ENCODE measurements at regions of chr2 and their contacts with region 1.

Region 1: GRCh38 chr2:159712143-159712928 is at the start of gene MARCHF7:
- DNase-seq: peak; percentile 97 to 100 (median 98)
- H3K4me3 ChIP-seq: peak within 1 kb of the TSS; percentile 88 to 98
- H3K4me3 Mint-ChIP-seq: peak within 1 kb of the TSS; percentile 97 to 100 (median 99)
- H3K27ac ChIP-seq: peak within 1 kb of the TSS; percentile 92
- H3K27ac Mint-ChIP-seq: peak within 1 kb of the TSS; percentile 90 to 100 (median 100)
- H3K4me1 ChIP-seq: peaks cover 53% of the 10 kb centered on the region
- H3K4me1 Mint-ChIP-seq: peaks cover 36 to 63% (median 49%) of the 10 kb centered on the region in 4 donors
- H3K27me3 ChIP-seq: no peaks in the 10 kb centered on the region
- H3K27me3 Mint-ChIP-seq: no peaks in the 10 kb centered on the region
- total RNA-seq, gene MARCHF7: 113 to 115 TPM

Region 2: GRCh38 chr2:157876066-157876787 is 1836.1 kb before region 1 on chr2 and contains the start of gene ACVR1:
- CTCF ChIA-PET with region 1: no interaction called
- POLR2A ChIA-PET with region 1: interaction called, 6 read pairs
- intact Hi-C with region 1: loop called (anchors 5 kb)
- DNase-seq: peak; percentile 78 to 90 (median 80)
- H3K4me3 ChIP-seq: peak within 1 kb of the TSS; percentile 74 to 76
- H3K4me3 Mint-ChIP-seq: peak within 1 kb of the TSS; percentile 94 to 100 (median 96)
- H3K27ac ChIP-seq: peak within 1 kb of the TSS; percentile 66
- H3K27ac Mint-ChIP-seq: peak within 1 kb of the TSS; percentile 88 to 96 (median 93)
- H3K4me1 ChIP-seq: peaks cover 71% of the 10 kb centered on the region
- H3K4me1 Mint-ChIP-seq: peaks cover 46 to 69% (median 60%) of the 10 kb centered on the region in 4 donors
- H3K27me3 ChIP-seq: no peaks in the 10 kb centered on the region
- H3K27me3 Mint-ChIP-seq: no peaks in the 10 kb centered on the region
- total RNA-seq, gene ACVR1: 26.9 to 31.9 TPM

Region 3: GRCh38 chr2:159286709-159287441 is 425.5 kb before region 1 on chr2:
- CTCF ChIA-PET with region 1: no interaction called
- POLR2A ChIA-PET with region 1: interaction called, 11 read pairs
- intact Hi-C with region 1: loop called (anchors 1 kb)
- DNase-seq: peak; percentile 94 to 95 (median 95)
- H3K4me3 ChIP-seq: peak overlapping the region; percentile 20 to 67
- H3K4me3 Mint-ChIP-seq: peak overlapping the region; percentile 85 to 92 (median 89)
- H3K27ac ChIP-seq: peak overlapping the region; percentile 64
- H3K27ac Mint-ChIP-seq: peak overlapping the region; percentile 61 to 93 (median 82)
- H3K4me1 ChIP-seq: peaks cover 13% of the 10 kb centered on the region
- H3K4me1 Mint-ChIP-seq: peaks cover 15 to 30% (median 23%) of the 10 kb centered on the region in 4 donors
- H3K27me3 ChIP-seq: no peaks in the 10 kb centered on the region
- H3K27me3 Mint-ChIP-seq: no peaks in the 10 kb centered on the region

Region 4: GRCh38 chr2:159516241-159516766 is 196.0 kb before region 1 on chr2:
- CTCF ChIA-PET with region 1: interaction called, 7 read pairs
- POLR2A ChIA-PET with region 1: interaction called, 25 read pairs
- intact Hi-C with region 1: loop called (anchors 1 kb)
- DNase-seq: peak; percentile 64 to 80 (median 69)
- H3K4me3 ChIP-seq: peak overlapping the region; percentile 82 to 83
- H3K4me3 Mint-ChIP-seq: peak overlapping the region; percentile 71 to 89 (median 85)
- H3K27ac ChIP-seq: peak overlapping the region; percentile 58
- H3K27ac Mint-ChIP-seq: peak overlapping the region; percentile 48 to 95 (median 88)
- H3K4me1 ChIP-seq: peaks cover 33% of the 10 kb centered on the region
- H3K4me1 Mint-ChIP-seq: peaks cover 13 to 40% (median 23%) of the 10 kb centered on the region in 4 donors
- H3K27me3 ChIP-seq: no peaks in the 10 kb centered on the region
- H3K27me3 Mint-ChIP-seq: no peaks in the 10 kb centered on the region

Region 5: DNA sequence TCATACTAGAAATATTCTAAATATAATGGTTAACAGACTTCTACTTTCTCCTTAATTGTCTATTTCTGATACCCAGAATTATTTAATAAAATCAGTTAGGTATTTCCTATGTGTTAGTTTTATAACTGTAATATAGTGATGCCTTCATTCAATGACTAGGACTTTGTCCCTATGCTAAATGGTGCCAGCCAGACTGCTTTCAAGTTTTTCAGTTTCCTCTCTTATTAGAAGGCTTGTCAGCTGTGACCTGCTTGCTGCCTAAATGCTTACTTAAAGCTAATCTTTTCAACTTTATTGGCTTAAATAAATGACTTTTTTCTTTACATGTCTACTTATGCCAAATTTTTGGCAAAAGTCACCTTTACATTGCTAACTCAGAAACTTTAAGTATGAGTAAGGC is 126.7 kb before region 1 on chr2:
- CTCF ChIA-PET with region 1: no interaction called
- POLR2A ChIA-PET with region 1: no interaction called
- intact Hi-C with region 1: no loop called
- DNase-seq: no peak
- H3K4me3 ChIP-seq: no peak overlapping the region
- H3K4me3 Mint-ChIP-seq: no peak overlapping the region
- H3K27ac ChIP-seq: no peak overlapping the region
- H3K27ac Mint-ChIP-seq: no peak overlapping the region
- H3K4me1 ChIP-seq: no peaks in the 10 kb centered on the region
- H3K4me1 Mint-ChIP-seq: no peaks in the 10 kb centered on the region
- H3K27me3 ChIP-seq: no peaks in the 10 kb centered on the region
- H3K27me3 Mint-ChIP-seq: no peaks in the 10 kb centered on the region

Region 6: GRCh38 chr2:159736048-159736447 is 23.7 kb after region 1 on chr2:
- CTCF ChIA-PET with region 1: interaction called, 9 read pairs
- POLR2A ChIA-PET with region 1: interaction called, 10 read pairs
- intact Hi-C with region 1: no loop called
- DNase-seq: no peak
- H3K4me3 ChIP-seq: no peak overlapping the region
- H3K4me3 Mint-ChIP-seq: no peak overlapping the region
- H3K27ac ChIP-seq: no peak overlapping the region
- H3K27ac Mint-ChIP-seq: peak overlapping the region in 1 of 7 donors; percentile 19
- H3K4me1 ChIP-seq: peaks cover 25% of the 10 kb centered on the region
- H3K4me1 Mint-ChIP-seq: peaks cover 20 to 48% (median 33%) of the 10 kb centered on the region in 4 donors
- H3K27me3 ChIP-seq: no peaks in the 10 kb centered on the region
- H3K27me3 Mint-ChIP-seq: no peaks in the 10 kb centered on the region

Region 7: DNA sequence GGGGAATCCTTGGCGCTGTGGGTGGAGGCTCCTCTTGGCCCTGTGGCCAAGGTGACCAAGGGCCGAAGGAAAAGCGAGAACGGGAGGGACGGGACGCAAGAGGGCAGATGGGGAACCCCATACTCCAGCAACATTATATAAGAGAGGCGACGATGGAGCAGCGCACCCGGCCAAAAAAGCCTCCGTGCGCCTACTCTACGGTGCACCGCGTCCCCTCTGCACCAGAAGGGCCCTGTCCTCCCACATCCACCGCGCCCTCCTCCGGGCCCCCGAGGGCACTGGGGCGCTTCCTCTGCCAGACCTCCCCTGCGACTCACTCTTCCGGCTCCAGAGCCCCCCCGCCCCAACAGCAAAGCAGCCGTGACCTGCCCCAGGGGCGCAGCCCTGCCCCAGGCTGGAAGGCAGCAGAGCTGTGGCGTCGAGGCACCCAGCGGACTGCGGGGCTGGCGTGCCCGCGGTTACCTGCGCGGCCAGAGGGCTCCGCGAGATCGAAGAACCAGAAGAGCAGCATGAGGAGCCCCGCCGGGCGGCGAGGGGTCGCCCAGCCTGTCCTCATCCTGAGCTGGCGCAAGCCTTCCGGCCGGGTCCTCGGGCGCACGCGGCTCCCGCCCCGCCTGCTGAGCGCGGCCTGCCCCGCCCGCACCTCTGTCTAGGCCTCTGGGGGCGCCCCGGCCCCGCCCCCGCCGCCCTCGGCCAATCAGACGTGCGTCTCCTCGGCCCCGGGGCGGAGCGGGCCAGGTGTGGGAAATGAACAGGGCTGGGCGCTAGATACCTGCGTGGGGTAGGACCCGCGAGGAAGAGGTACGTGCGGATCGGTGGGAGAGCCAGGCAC is 192.0 kb after region 1 on chr2:
- CTCF ChIA-PET with region 1: no interaction called
- POLR2A ChIA-PET with region 1: interaction called, 13 read pairs
- intact Hi-C with region 1: loop called (anchors 1 kb)
- DNase-seq: peak; percentile 79 to 85 (median 82)
- H3K4me3 ChIP-seq: peak within 1 kb of the TSS; percentile 92 to 97
- H3K4me3 Mint-ChIP-seq: peak within 1 kb of the TSS; percentile 98 to 100 (median 99)
- H3K27ac ChIP-seq: peak within 1 kb of the TSS; percentile 82
- H3K27ac Mint-ChIP-seq: peak within 1 kb of the TSS; percentile 97 to 100 (median 98)
- H3K4me1 ChIP-seq: peaks cover 21% of the 10 kb centered on the region
- H3K4me1 Mint-ChIP-seq: peaks cover 18 to 43% (median 30%) of the 10 kb centered on the region in 4 donors
- H3K27me3 ChIP-seq: no peaks in the 10 kb centered on the region
- H3K27me3 Mint-ChIP-seq: no peaks in the 10 kb centered on the region

Region 8: DNA sequence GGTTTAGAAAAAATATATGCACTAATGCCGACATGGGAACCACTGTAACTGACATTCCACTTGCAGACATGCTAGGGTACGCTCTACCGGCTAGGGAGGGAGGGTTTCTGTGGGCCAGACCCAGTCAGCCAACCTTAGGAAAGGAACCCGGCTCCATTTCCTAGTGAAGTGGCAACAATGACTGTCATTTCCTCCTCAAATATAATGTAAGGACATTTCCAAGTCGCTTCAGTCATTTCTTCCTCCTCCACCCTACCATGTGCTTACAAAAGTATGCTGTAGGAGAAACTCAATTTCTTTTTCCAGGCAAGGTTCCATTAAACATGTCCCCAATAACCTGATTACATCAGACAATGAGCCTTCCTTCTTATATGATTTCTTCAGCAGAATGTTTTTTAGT is 1531.6 kb after region 1 on chr2:
- CTCF ChIA-PET with region 1: no interaction called
- POLR2A ChIA-PET with region 1: no interaction called
- intact Hi-C with region 1: loop called (anchors 2 kb)
- DNase-seq: peak in 2 of 5 donors; percentile 11 to 44
- H3K4me3 ChIP-seq: peak overlapping the region; percentile 33 to 36
- H3K4me3 Mint-ChIP-seq: peak overlapping the region; percentile 84 to 96 (median 90)
- H3K27ac ChIP-seq: peak overlapping the region; percentile 78
- H3K27ac Mint-ChIP-seq: peak overlapping the region; percentile 84 to 98 (median 96)
- H3K4me1 ChIP-seq: peaks cover 46% of the 10 kb centered on the region
- H3K4me1 Mint-ChIP-seq: peaks cover 39 to 73% (median 61%) of the 10 kb centered on the region in 4 donors
- H3K27me3 ChIP-seq: no peaks in the 10 kb centered on the region
- H3K27me3 Mint-ChIP-seq: no peaks in the 10 kb centered on the region